B cell (primary cell): ENCODE measurements at regions of chr5 and their contacts with region 1.

Region 1: DNA sequence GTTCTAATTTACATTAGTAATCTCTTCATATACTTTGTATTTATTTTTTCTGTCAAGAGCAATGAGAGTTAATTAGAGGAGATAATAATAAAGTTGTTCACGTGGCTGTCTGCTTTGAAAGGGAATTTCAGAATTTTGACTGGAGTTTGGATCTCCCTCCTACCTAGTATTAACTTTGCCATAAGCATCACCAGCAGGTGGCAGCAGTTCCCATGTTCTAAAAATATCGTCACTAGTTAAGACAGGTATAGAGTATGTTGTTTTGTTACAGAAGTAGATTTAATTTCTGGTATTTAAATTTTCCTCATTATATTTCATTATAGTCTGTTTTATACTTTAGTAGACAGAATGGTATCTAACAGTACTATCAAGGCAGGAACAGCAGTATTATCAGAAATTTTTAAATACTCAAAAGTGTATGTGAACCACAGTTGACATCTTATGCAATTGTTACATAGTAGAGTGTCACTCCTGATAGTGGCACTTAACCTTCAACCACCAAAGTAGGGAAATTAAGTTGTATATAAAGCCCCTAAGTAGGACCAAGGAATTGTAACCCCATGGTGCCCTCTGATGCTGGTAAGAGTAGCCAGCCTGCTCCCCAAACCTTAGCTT is 20.4 kb downstream of the GNPDA1 start:
- DNase-seq: peak; percentile 77
- ATAC-seq: peak; percentile 72
- H3K4me3 ChIP-seq: no peak overlapping the region
- H3K4me3 Mint-ChIP-seq: no peak overlapping the region
- H3K27ac ChIP-seq: no peak overlapping the region
- H3K27ac Mint-ChIP-seq: no peak overlapping the region
- H3K4me1 ChIP-seq: no peaks in the 10 kb centered on the region
- H3K4me1 Mint-ChIP-seq: no peaks in the 10 kb centered on the region
- H3K27me3 ChIP-seq: no peaks in the 10 kb centered on the region
- H3K27me3 Mint-ChIP-seq: no peaks in the 10 kb centered on the region
- CTCF ChIP-seq: peak; percentile 90

Region 2: GRCh38 chr5:141976176-141976575 is 16.3 kb before region 1 on chr5:
- CTCF ChIA-PET with region 1: interaction called, 46 read pairs
- POLR2A ChIA-PET with region 1: no interaction called
- intact Hi-C with region 1: no loop called
- DNase-seq: no peak
- ATAC-seq: no peak
- H3K4me3 ChIP-seq: no peak overlapping the region
- H3K4me3 Mint-ChIP-seq: no peak overlapping the region
- H3K27ac ChIP-seq: no peak overlapping the region
- H3K27ac Mint-ChIP-seq: no peak overlapping the region
- H3K4me1 ChIP-seq: no peaks in the 10 kb centered on the region
- H3K4me1 Mint-ChIP-seq: peaks cover 4% of the 10 kb centered on the region
- H3K27me3 ChIP-seq: no peaks in the 10 kb centered on the region
- H3K27me3 Mint-ChIP-seq: no peaks in the 10 kb centered on the region
- CTCF ChIP-seq: no peak

Region 3: GRCh38 chr5:142145106-142145900 is 152.8 kb after region 1 on chr5:
- CTCF ChIA-PET with region 1: interaction called, 208 read pairs
- POLR2A ChIA-PET with region 1: no interaction called
- intact Hi-C with region 1: loop called (anchors 1 kb)
- DNase-seq: peak; percentile 59
- ATAC-seq: peak; percentile 70
- H3K4me3 ChIP-seq: no peak overlapping the region
- H3K4me3 Mint-ChIP-seq: no peak overlapping the region
- H3K27ac ChIP-seq: no peak overlapping the region
- H3K27ac Mint-ChIP-seq: no peak overlapping the region
- H3K4me1 ChIP-seq: no peaks in the 10 kb centered on the region
- H3K4me1 Mint-ChIP-seq: no peaks in the 10 kb centered on the region
- H3K27me3 ChIP-seq: no peaks in the 10 kb centered on the region
- H3K27me3 Mint-ChIP-seq: no peaks in the 10 kb centered on the region
- CTCF ChIP-seq: peak; percentile 74

Region 4: GRCh38 chr5:142390334-142390733 is 397.9 kb after region 1 on chr5:
- CTCF ChIA-PET with region 1: no interaction called
- POLR2A ChIA-PET with region 1: no interaction called
- intact Hi-C with region 1: no loop called
- DNase-seq: no peak
- ATAC-seq: no peak
- H3K4me3 ChIP-seq: no peak overlapping the region
- H3K4me3 Mint-ChIP-seq: no peak overlapping the region
- H3K27ac ChIP-seq: no peak overlapping the region
- H3K27ac Mint-ChIP-seq: no peak overlapping the region
- H3K4me1 ChIP-seq: peaks cover 0 to 3% of the 10 kb centered on the region in 2 donors
- H3K4me1 Mint-ChIP-seq: no peaks in the 10 kb centered on the region
- H3K27me3 ChIP-seq: peaks cover 0 to 7% (median 0%) of the 10 kb centered on the region in 4 experiments
- H3K27me3 Mint-ChIP-seq: peaks cover 17% of the 10 kb centered on the region
- CTCF ChIP-seq: no peak